HepG2 (cell line): ENCODE measurements at regions of chr2 and their contacts with region 1.

Region 1: DNA sequence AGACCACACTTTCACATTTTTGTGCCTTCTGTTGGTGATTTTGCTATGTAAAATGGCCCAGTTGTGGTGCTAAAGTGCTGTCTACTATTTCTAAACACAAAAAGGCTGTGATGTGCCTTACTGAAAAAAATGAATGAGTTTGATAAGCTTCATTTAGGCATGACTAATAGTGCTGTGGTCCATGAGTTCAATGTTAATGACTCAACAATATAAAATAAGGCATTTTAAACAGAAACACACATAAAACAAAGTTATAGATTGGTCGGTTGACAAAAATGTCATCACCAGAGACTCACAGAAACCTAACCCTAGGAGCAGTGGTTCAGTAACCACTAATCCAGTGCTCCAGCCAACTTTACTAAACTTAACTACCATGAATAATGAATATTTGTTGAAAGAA is 160.0 kb downstream of the DNAH6 start:
- DNase-seq: no peak
- ATAC-seq: no peak
- H3K4me3 ChIP-seq: no peak overlapping the region
- H3K27ac ChIP-seq: no peak overlapping the region
- H3K4me1 ChIP-seq: no peaks in the 10 kb centered on the region
- H3K27me3 ChIP-seq: no peaks in the 10 kb centered on the region; a peak in 1 of 5 replicates
- CTCF ChIP-seq: no peak
- EP300 ChIP-seq: no peak
- POLR2A ChIP-seq: no peak
- RAD21 ChIP-seq: no peak

Region 2: DNA sequence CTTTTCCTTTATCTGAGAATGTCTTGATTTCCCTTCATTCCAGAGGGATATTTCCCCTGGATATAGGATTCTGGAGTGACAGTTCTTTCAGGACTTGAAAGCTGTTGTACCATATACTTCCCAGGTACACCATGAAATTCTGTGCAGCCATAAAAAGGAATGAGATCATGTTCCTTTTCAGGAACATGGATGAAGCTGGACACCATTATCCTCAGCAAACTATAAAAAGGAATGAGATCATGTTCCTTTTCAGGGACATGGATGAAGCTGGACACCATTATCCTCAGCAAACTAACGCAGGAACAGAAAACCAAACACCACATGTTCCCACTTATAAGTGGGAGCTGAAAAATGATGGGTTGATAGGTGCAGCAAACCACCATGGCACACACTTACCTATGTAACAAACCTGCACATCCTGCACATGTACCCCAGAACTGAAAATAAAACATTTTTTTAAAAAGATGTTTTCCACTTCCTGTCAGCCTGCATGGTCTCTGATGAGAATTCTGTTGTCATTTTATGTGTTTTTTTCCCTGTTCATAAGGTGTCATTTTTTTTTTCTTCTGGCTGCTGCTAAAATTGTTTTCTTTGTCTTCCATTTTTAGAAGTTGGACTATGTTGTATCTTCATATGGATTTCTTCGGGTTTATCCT is 26.7 kb before region 1 on chr2:
- CTCF ChIA-PET with region 1: no interaction called
- POLR2A ChIA-PET with region 1: no interaction called
- in situ Hi-C with region 1: no loop called
- intact Hi-C with region 1: loop called (anchors 1 kb)
- DNase-seq: no peak
- ATAC-seq: no peak
- H3K4me3 ChIP-seq: no peak overlapping the region
- H3K27ac ChIP-seq: no peak overlapping the region
- H3K4me1 ChIP-seq: no peaks in the 10 kb centered on the region
- H3K27me3 ChIP-seq: no peaks in the 10 kb centered on the region
- CTCF ChIP-seq: no peak
- EP300 ChIP-seq: no peak
- POLR2A ChIP-seq: no peak
- RAD21 ChIP-seq: no peak